Aorta (tissue), 5 donors: ENCODE measurements at regions of chr17 and their contacts with region 1.

Region 1: GRCh38 chr17:78360371-78361224 is 721 bp upstream of the SOCS3 start:
- DNase-seq: peak; percentile 96 to 99
- ATAC-seq: peak; percentile 84
- H3K4me3 ChIP-seq: no peak overlapping the region
- H3K27ac ChIP-seq: peak overlapping the region; percentile 14 to 75
- H3K4me1 ChIP-seq: peaks cover 2 to 5% of the 10 kb centered on the region in 2 donors
- H3K27me3 ChIP-seq: no peaks in the 10 kb centered on the region

Region 2: DNA sequence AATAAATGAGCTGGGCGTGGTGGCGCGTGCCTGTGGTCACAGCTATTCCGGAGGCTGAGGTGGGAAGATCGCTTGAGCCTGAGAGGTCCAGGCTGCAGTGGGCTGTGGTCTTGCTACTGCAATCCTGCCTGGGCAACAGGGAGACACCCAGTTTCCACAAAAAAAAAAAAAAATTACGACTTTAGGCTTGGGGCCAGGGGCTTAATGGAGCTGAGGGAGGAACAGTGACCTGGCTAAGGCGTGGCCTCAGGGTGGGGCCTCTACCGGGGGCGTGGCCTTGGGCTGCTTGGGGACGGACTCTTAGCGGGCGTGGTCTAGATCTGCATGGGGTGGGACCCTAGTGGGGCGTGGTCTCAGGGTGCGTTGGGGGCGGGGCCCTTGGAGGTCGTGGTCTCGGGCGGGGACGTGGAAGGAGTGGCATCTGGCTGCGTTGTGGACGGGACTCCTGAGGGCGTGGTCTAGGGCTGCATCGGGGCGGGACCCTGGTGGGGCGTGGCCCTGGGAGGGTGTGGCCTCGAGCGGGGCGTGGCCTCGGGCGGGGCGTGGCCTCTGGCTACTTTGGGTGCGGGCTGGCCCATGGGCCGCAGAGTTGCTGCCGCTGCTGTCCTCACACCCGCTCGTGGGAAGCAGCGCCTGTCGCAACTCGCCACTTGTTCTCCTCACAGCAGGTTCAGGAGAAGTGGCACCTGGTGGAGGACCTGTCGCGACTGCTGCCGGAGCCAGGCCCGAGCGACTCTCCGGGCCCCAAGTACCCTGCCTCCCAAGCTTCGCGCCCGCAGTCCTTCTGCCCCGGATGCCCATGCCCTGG is 220.2 kb before region 1 on chr17:
- intact Hi-C with region 1: no loop called
- DNase-seq: peak; percentile 92 to 94
- ATAC-seq: peak; percentile 73
- H3K4me3 ChIP-seq: no peak overlapping the region
- H3K27ac ChIP-seq: no peak overlapping the region
- H3K4me1 ChIP-seq: no peaks in the 10 kb centered on the region
- H3K27me3 ChIP-seq: no peaks in the 10 kb centered on the region

Region 3: DNA sequence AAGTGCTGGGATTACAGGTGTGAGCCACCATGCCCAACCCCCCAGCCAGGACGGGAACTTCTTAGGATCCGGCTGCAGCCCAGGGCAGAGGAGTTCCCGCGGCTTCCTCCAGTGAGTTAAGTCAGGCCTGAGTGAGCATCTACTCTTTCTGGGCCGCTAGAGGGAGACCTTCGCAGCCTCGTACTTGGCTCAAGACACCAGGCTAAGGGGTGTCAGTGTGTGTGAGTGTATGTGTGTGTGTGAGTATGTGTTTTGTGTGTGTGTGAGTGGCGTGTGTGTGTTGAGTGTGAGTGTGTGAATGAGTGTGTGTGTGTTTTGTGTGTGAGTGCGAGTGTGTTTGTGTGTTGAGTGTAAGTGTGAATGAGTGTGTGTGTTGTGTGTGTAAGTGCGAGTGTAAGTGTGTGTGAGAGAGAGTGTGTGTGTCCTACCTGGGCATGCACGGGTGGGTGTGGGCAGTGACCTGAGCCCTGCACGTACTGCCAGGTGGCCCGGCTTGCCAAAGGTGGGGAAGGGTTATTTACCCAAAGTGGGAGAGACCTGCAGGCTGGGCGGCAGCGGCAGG is 70.7 kb before region 1 on chr17:
- intact Hi-C with region 1: loop called (anchors 2 to 5 kb)
- DNase-seq: peak; percentile 88 to 91
- ATAC-seq: peak; percentile 90
- H3K4me3 ChIP-seq: no peak overlapping the region
- H3K27ac ChIP-seq: no peak overlapping the region
- H3K4me1 ChIP-seq: no peaks in the 10 kb centered on the region
- H3K27me3 ChIP-seq: no peaks in the 10 kb centered on the region

Region 4: GRCh38 chr17:78313735-78314648 is 46.6 kb before region 1 on chr17:
- intact Hi-C with region 1: loop called in 1 of 2 experiments (anchors 1 kb)
- DNase-seq: peak; percentile 83 to 92
- ATAC-seq: peak; percentile 78
- H3K4me3 ChIP-seq: peak overlapping the region; percentile 42 to 59
- H3K27ac ChIP-seq: peak overlapping the region in 1 of 2 donors; percentile 29
- H3K4me1 ChIP-seq: no peaks in the 10 kb centered on the region
- H3K27me3 ChIP-seq: no peaks in the 10 kb centered on the region

Region 5: DNA sequence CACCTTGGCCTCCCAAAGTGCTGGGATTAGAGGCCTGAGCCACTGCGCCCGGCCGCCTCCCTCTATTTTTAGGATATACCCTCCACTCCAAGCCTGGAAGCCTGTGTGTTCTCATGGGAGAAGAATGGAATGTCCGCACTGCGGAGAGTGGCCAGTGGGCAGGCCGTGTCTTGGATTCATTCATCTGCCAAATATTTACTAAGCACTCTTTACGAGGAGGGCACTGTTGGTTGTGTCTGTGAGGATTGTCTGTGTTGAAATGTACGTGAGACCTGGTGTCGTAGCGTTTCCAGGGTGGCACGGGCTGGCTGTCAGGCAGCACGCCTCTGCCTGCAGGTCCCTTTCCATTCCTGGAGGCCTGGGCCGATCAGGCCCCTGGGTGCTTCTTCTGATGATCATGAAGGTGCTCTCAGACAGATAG is 37.1 kb after region 1 on chr17:
- intact Hi-C with region 1: loop called in 1 of 2 experiments (anchors 1 kb)
- DNase-seq: peak; percentile 77 to 86
- ATAC-seq: peak; percentile 82
- H3K4me3 ChIP-seq: no peak overlapping the region
- H3K27ac ChIP-seq: peak overlapping the region in 1 of 2 donors; percentile 96
- H3K4me1 ChIP-seq: peaks cover 2 to 4% of the 10 kb centered on the region in 2 donors
- H3K27me3 ChIP-seq: no peaks in the 10 kb centered on the region